ENCODE measurements at regions of chr7 and their contacts with region 1.

Region 1: GRCh38 chr7:17205910-17206905 is 92.2 kb upstream of the AHR start:
- DNase-seq: no peak
- H3K4me3 ChIP-seq: no peak overlapping the region
- H3K27ac ChIP-seq: no peak overlapping the region
- H3K4me1 ChIP-seq: no peaks in the 10 kb centered on the region
- H3K27me3 ChIP-seq: no peaks in the 10 kb centered on the region
- CTCF ChIP-seq: no peak
- POLR2A ChIP-seq: no peak

Region 2: GRCh38 chr7:17506095-17506494 is 299.9 kb after region 1 on chr7:
- intact Hi-C with region 1: no loop called
- DNase-seq: no peak
- H3K4me3 ChIP-seq: no peak overlapping the region
- H3K27ac ChIP-seq: no peak overlapping the region
- H3K4me1 ChIP-seq: peaks cover 4% of the 10 kb centered on the region
- H3K27me3 ChIP-seq: no peaks in the 10 kb centered on the region
- CTCF ChIP-seq: no peak
- POLR2A ChIP-seq: no peak

Region 3: GRCh38 chr7:18177815-18178660 is 971.8 kb after region 1 on chr7:
- intact Hi-C with region 1: loop called (anchors 10 kb)
- DNase-seq: no peak
- H3K4me3 ChIP-seq: no peak overlapping the region
- H3K27ac ChIP-seq: no peak overlapping the region
- H3K4me1 ChIP-seq: no peaks in the 10 kb centered on the region
- H3K27me3 ChIP-seq: no peaks in the 10 kb centered on the region
- CTCF ChIP-seq: no peak
- POLR2A ChIP-seq: no peak

Measured in vagina (tissue), 2 donors.